ENCODE measurements at regions of chr10 and their contacts with region 1.

Region 1: GRCh38 chr10:36779234-36779846 is 346.1 kb upstream of the ANKRD30A start:
- DNase-seq: peak; percentile 100
- ATAC-seq: peak; percentile 98
- H3K4me3 ChIP-seq: no peak overlapping the region
- H3K27ac ChIP-seq: peak overlapping the region; percentile 13
- H3K4me1 ChIP-seq: peaks cover 25% of the 10 kb centered on the region
- H3K27me3 ChIP-seq: no peaks in the 10 kb centered on the region
- CTCF ChIP-seq: peak; percentile 100

Region 2: DNA sequence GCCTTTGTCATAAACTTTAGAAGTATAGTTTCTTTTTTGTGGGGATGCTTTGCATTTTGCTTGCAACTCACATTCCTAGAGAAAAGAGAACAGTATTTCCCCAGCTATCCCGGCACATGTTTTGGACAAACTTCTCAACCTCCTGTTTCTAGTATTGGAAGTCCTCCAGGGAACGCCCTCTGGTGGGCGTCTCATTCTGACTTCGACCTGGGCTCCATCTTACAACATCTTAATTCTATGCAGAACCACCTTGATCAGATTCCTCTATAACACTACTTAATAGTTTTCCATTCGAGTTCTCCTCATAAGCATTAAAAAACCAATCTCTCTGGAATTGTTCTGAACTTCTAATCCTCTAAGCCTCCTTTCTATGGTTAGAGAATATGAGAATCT is 997.7 kb before region 1 on chr10:
- CTCF ChIA-PET with region 1: interaction called, 8 read pairs
- POLR2A ChIA-PET with region 1: no interaction called
- intact Hi-C with region 1: loop called (anchors 1 kb)
- DNase-seq: peak; percentile 72
- ATAC-seq: no peak
- H3K4me3 ChIP-seq: no peak overlapping the region
- H3K27ac ChIP-seq: peak overlapping the region; percentile 72; the same call in 1 of the 2 replicates
- H3K4me1 ChIP-seq: peaks cover 37% of the 10 kb centered on the region
- H3K27me3 ChIP-seq: no peaks in the 10 kb centered on the region
- CTCF ChIP-seq: peak; percentile 72

Region 3: DNA sequence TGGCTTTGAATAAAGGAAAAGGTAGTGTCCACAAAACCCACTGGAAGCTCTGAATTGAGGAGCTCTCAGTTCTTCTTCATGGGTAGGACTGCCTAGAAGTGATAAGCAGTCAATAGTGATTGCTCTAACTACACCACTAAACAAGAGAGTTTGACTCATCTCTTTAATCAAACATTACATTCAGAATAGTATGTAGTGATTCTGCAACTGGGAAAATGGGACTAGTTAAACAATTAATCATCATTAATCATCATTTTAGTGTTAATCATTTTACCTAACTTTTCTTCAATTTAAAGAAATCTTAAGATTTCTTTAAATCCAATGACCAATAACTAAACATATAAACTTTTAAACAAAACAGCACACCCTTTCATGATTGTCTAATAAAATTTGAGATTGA is 653.3 kb before region 1 on chr10:
- CTCF ChIA-PET with region 1: interaction called, 4 read pairs
- POLR2A ChIA-PET with region 1: no interaction called
- intact Hi-C with region 1: loop called (anchors 5 kb)
- DNase-seq: peak; percentile 96
- ATAC-seq: peak; percentile 98
- H3K4me3 ChIP-seq: no peak overlapping the region
- H3K27ac ChIP-seq: peak overlapping the region; percentile 55
- H3K4me1 ChIP-seq: peaks cover 24% of the 10 kb centered on the region
- H3K27me3 ChIP-seq: no peaks in the 10 kb centered on the region
- CTCF ChIP-seq: no peak

Region 4: DNA sequence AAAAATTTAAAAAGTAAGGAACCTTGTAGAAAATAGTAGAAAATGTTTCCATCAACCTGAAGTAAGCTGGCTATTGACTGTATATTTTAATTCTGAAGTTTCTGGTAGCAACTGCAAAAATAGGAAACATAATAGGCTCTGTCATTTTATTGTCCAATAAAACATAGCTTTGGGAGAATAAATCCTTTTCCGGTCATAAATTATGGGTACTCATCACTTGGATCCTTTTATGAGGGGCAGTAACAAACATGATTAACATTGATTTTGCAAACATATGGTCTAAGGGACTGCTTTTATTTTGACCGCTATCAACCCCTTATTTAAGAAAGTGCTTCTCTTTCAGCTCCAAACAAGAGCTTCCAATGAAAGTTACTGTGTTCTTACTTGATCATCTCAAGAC is 149.9 kb before region 1 on chr10:
- CTCF ChIA-PET with region 1: interaction called, 3 read pairs
- POLR2A ChIA-PET with region 1: no interaction called
- intact Hi-C with region 1: loop called (anchors 1 kb)
- DNase-seq: peak; percentile 76
- ATAC-seq: peak; percentile 71
- H3K4me3 ChIP-seq: no peak overlapping the region
- H3K27ac ChIP-seq: peak overlapping the region; percentile 81
- H3K4me1 ChIP-seq: peaks cover 24% of the 10 kb centered on the region
- H3K27me3 ChIP-seq: no peaks in the 10 kb centered on the region
- CTCF ChIP-seq: no peak

Region 5: DNA sequence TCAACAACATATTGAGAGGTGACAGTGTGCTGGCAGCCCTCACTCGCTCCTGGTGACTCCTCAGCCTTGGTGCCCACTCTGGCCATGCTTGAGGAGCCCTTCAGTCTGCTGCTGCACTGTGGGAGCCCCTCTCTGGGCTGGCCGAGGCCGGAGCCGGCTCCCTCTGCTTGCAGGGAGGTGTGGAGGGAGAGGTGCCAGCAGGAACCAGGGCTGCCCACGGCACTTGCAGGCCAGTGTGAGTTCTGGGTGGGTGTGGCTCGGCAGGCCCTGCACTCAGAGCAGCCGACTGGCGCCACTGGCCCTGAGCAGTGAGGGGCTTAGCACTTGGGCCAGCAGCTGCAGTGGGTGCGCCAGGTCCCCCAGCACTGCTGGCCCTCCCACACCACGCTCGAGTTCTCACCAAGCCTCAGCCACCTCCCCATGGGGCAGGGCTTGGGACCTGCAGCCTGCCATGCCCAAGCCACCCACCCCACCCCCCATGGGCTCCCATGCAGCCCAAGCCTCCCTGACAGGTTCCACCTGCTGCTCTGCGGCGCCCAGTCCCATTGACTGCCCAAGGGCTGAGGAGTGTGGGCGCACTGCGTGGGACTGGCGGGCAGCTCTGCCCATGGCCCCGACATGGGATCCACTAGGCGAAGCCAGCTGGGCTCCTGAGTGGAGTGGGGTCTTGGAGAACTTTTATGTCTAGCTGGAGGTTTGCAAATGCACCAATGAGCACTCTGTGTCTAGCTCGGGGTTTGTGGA is 31.0 kb before region 1 on chr10:
- CTCF ChIA-PET with region 1: no interaction called
- POLR2A ChIA-PET with region 1: no interaction called
- intact Hi-C with region 1: no loop called
- DNase-seq: no peak
- ATAC-seq: no peak
- H3K4me3 ChIP-seq: no peak overlapping the region
- H3K27ac ChIP-seq: no peak overlapping the region
- H3K4me1 ChIP-seq: no peaks in the 10 kb centered on the region
- H3K27me3 ChIP-seq: no peaks in the 10 kb centered on the region
- CTCF ChIP-seq: no peak

Region 6: GRCh38 chr10:36759141-36759805 is 20.1 kb before region 1 on chr10:
- CTCF ChIA-PET with region 1: interaction called, 9 read pairs
- POLR2A ChIA-PET with region 1: no interaction called
- intact Hi-C with region 1: loop called (anchors 1 kb)
- DNase-seq: peak; percentile 100
- ATAC-seq: peak; percentile 97
- H3K4me3 ChIP-seq: no peak overlapping the region
- H3K27ac ChIP-seq: peak overlapping the region; percentile 55
- H3K4me1 ChIP-seq: peaks cover 30% of the 10 kb centered on the region
- H3K27me3 ChIP-seq: no peaks in the 10 kb centered on the region
- CTCF ChIP-seq: no peak

Region 7: DNA sequence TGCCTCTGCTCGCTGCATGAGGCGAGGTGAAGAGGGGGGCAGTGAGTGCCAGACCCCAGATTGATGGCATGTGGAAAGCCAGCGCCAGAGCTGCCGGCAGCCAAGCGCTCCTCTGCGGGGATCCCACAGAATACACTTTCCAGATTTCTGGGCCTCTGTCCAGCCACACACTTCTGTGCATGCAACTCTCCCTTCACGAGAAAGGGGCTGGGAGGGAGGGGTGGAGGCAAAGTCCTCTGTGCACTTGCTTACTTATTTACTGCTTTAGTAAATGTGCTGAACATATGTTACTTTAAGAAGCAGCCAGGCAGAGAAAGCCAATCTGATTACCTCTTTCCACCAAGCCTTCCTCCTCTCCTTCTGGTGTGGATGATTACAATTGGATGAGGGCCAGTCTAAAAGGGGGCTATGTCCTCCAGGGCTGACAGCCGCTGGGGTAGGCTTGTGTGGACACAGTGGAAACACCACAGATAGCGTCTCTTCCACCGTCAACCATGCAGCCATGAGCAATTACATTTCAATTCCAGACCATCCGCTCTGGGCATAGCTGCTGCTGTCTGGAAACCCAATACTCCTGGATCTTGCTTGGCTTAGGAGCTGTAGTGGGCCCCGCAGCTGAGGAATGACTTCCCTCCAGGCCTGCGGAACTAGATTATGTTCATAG is 23.3 kb after region 1 on chr10:
- CTCF ChIA-PET with region 1: no interaction called
- POLR2A ChIA-PET with region 1: no interaction called
- intact Hi-C with region 1: no loop called
- DNase-seq: no peak
- ATAC-seq: no peak
- H3K4me3 ChIP-seq: no peak overlapping the region
- H3K27ac ChIP-seq: no peak overlapping the region
- H3K4me1 ChIP-seq: no peaks in the 10 kb centered on the region
- H3K27me3 ChIP-seq: no peaks in the 10 kb centered on the region
- CTCF ChIP-seq: no peak